Activated CD8-positive, alpha-beta T cell treated with anti-CD3 and anti-CD28 coated beads, Interleukin-2, amount 10 ng/mL, durations not matched to agents 7 days and 5 days (primary cell): ENCODE measurements at regions of chr9 and their contacts with region 1.

Region 1: GRCh38 chr9:125361837-125362531 is 100.4 kb downstream of the GAPVD1 start:
- DNase-seq: peak; percentile 45
- ATAC-seq: peak; percentile 39
- H3K4me3 Mint-ChIP-seq: no peak overlapping the region
- H3K27ac Mint-ChIP-seq: no peak overlapping the region
- H3K4me1 Mint-ChIP-seq: peaks cover 13% of the 10 kb centered on the region
- H3K27me3 Mint-ChIP-seq: no peaks in the 10 kb centered on the region

Region 2: GRCh38 chr9:125189361-125190289 is 172.4 kb before region 1 on chr9 and contains the start of gene PPP6C:
- CTCF ChIA-PET with region 1: no interaction called
- POLR2A ChIA-PET with region 1: no interaction called
- DNase-seq: peak; percentile 99
- ATAC-seq: peak; percentile 98
- H3K4me3 Mint-ChIP-seq: peak within 1 kb of the TSS; percentile 89
- H3K27ac Mint-ChIP-seq: peak within 1 kb of the TSS; percentile 95
- H3K4me1 Mint-ChIP-seq: peaks cover 49% of the 10 kb centered on the region
- H3K27me3 Mint-ChIP-seq: no peaks in the 10 kb centered on the region
- total RNA-seq, gene PPP6C: 47.2 to 51.9 TPM

Region 3: GRCh38 chr9:125233678-125234077 is 128.3 kb before region 1 on chr9:
- CTCF ChIA-PET with region 1: interaction called, 10 read pairs
- POLR2A ChIA-PET with region 1: no interaction called
- DNase-seq: no peak
- ATAC-seq: no peak
- H3K4me3 Mint-ChIP-seq: no peak overlapping the region
- H3K27ac Mint-ChIP-seq: no peak overlapping the region
- H3K4me1 Mint-ChIP-seq: peaks cover 37% of the 10 kb centered on the region
- H3K27me3 Mint-ChIP-seq: no peaks in the 10 kb centered on the region

Region 4: DNA sequence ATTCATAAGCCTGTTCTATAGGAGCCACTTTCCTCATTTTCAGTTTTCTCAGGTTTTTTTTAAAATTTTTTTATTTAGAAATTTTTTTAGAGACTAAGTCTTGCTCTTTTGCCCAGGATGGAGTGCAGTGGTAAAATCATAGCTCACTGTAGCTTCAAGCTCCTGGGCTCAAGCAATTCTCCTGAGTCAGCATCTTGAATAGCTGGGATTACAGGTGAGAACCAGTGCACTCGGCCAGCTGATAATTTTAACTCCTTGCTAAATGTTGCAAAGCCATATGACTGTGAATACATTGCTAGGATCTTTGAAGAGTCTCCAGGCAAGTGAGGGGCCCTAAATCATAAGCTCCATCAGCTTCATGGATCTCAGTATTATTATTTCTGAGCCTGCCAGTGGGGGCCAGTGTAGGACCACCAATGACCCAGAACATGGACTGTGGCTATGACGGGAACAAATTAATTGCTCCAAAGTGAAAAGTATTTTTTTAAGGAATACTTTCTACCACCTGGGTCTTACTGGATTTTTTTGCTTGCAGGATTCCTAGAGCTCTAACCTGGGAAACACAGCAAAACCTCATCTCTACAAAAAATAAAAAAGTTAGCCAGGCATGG is 106.1 kb before region 1 on chr9:
- CTCF ChIA-PET with region 1: interaction called, 14 read pairs
- POLR2A ChIA-PET with region 1: no interaction called
- DNase-seq: peak; percentile 34
- ATAC-seq: peak; percentile 53
- H3K4me3 Mint-ChIP-seq: no peak overlapping the region
- H3K27ac Mint-ChIP-seq: no peak overlapping the region
- H3K4me1 Mint-ChIP-seq: peaks cover 6% of the 10 kb centered on the region
- H3K27me3 Mint-ChIP-seq: peaks cover 4% of the 10 kb centered on the region

Region 5: GRCh38 chr9:125284855-125285254 is 77.1 kb before region 1 on chr9:
- CTCF ChIA-PET with region 1: no interaction called
- POLR2A ChIA-PET with region 1: no interaction called
- DNase-seq: no peak
- ATAC-seq: no peak
- H3K4me3 Mint-ChIP-seq: no peak overlapping the region
- H3K27ac Mint-ChIP-seq: no peak overlapping the region
- H3K4me1 Mint-ChIP-seq: peaks cover 6% of the 10 kb centered on the region
- H3K27me3 Mint-ChIP-seq: no peaks in the 10 kb centered on the region

Region 6: DNA sequence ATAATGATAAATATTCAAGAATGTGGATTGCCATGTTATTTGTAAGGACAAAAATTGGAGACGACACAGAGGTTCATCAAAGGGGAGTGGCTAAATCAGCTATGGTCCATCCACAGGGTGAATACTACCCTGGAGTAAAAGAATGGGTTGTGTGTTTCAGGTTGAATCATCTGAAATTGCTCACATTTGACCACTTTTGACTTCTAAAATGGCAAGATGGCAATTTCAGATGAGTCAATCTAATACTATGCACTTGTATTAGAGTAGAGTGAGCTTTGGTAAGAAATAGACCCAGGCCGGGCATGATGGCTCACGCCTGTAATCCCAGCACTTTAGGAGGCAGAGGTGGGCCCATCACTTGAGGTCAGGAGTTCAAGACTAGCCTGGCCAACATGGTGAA is 31.4 kb after region 1 on chr9:
- CTCF ChIA-PET with region 1: no interaction called
- POLR2A ChIA-PET with region 1: no interaction called
- DNase-seq: no peak
- ATAC-seq: no peak
- H3K4me3 Mint-ChIP-seq: no peak overlapping the region
- H3K27ac Mint-ChIP-seq: no peak overlapping the region
- H3K4me1 Mint-ChIP-seq: peaks cover 3% of the 10 kb centered on the region
- H3K27me3 Mint-ChIP-seq: peaks cover 2% of the 10 kb centered on the region